ENCODE measurements at regions of chr19 and their contacts with region 1.

Region 1: GRCh38 chr19:7340959-7341837 is 7.5 kb upstream of the ARHGEF18 start:
- DNase-seq: peak; percentile 83
- H3K4me3 Mint-ChIP-seq: no peak overlapping the region
- H3K27ac Mint-ChIP-seq: no peak overlapping the region
- H3K4me1 Mint-ChIP-seq: peaks cover 14% of the 10 kb centered on the region
- H3K27me3 Mint-ChIP-seq: peaks cover 40% of the 10 kb centered on the region
- CTCF ChIP-seq: peak; percentile 68

Region 2: DNA sequence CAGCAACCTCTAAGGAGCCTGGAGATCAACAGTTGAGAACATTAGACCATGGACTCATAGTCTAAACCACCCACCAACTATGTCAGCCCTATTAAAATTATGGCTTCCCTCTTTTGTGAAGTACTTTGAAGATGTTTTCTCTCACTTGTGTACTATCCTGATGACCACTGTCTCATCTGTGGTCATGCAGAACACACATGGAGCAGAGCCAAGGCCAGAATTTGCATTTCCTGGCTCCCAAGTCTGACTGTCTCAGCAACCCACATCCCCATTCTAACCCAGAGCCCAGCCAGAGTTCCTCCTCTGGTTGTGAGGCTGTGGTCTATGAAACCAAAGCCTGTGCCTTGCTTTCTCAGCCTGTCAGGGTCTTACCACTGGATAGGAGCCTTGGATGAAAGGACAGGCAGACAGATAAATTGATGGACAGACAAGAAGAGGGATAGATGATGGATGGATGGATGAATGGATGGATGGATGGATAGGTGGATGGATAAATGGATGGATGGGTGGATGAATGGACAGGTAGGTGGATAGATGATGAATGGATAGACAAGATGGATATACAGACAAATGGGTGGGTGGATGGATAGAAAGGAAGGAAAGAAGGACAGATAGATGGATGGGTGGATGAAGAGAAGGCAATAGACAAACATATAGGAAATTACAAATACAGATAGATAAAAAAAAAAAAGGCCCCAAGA is 236.3 kb before region 1 on chr19:
- CTCF ChIA-PET with region 1: interaction called, 8 read pairs
- intact Hi-C with region 1: loop called (anchors 5 kb)
- DNase-seq: no peak
- H3K4me3 Mint-ChIP-seq: no peak overlapping the region
- H3K27ac Mint-ChIP-seq: no peak overlapping the region
- H3K4me1 Mint-ChIP-seq: no peaks in the 10 kb centered on the region
- H3K27me3 Mint-ChIP-seq: peaks cover 13% of the 10 kb centered on the region
- CTCF ChIP-seq: no peak

Region 3: GRCh38 chr19:7145494-7146485 is 195.4 kb before region 1 on chr19:
- CTCF ChIA-PET with region 1: no interaction called
- intact Hi-C with region 1: loop called (anchors 5 kb)
- DNase-seq: no peak
- H3K4me3 Mint-ChIP-seq: no peak overlapping the region
- H3K27ac Mint-ChIP-seq: no peak overlapping the region
- H3K4me1 Mint-ChIP-seq: no peaks in the 10 kb centered on the region
- H3K27me3 Mint-ChIP-seq: no peaks in the 10 kb centered on the region
- CTCF ChIP-seq: no peak

Measured in Calu3 (cell line).